ENCODE measurements at regions of chr5 and their contacts with region 1.

Region 1: DNA sequence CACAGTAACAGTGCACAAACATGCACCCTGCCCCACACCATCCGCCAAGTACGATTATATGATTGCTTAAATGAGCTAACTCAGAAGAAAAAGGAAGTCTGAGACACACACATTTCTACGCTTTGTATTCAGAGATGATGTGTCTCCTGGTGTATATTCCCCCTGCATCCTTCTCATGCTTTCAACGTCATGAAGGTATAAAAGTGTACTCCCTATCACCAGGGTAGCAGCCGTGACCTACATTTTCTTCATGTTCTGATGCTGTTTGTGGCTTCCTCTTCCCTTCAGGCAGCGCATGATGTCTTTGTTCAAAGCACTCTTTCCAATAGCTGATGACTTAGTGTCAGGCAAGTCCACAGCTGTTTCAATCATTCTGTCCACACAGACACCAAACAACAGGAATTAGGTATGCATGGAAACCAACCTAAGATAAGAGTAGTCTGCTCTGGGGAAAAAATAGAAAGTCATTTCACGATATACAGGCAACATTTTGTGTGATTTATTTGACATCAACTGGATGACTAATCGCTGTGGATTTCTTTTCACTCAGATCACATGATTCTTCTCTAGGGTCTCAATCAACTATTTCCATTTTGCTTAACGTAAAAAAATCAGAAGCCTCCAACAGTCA is 269.4 kb upstream of the PTGER4 start:
- DNase-seq: peak; percentile 84 to 91 (median 89)
- H3K4me3 ChIP-seq: peak overlapping the region in 2 of 3 experiments; percentile 32 to 56
- H3K4me3 Mint-ChIP-seq: peak overlapping the region; percentile 60 to 82
- H3K27ac ChIP-seq: peak overlapping the region; percentile 83 to 96
- H3K27ac Mint-ChIP-seq: peak overlapping the region; percentile 97 to 100 (median 99)
- H3K4me1 ChIP-seq: peaks cover 78 to 84% of the 10 kb centered on the region in 2 donors
- H3K4me1 Mint-ChIP-seq: peaks cover 79% of the 10 kb centered on the region
- H3K27me3 ChIP-seq: no peaks in the 10 kb centered on the region
- H3K27me3 Mint-ChIP-seq: peaks cover 0 to 2% (median 0%) of the 10 kb centered on the region in 3 donors
- CTCF ChIP-seq: no peak

Region 2: GRCh38 chr5:39740404-39740803 is 669.9 kb before region 1 on chr5:
- intact Hi-C with region 1: no loop called
- DNase-seq: no peak
- H3K4me3 ChIP-seq: no peak overlapping the region
- H3K4me3 Mint-ChIP-seq: no peak overlapping the region
- H3K27ac ChIP-seq: no peak overlapping the region
- H3K27ac Mint-ChIP-seq: no peak overlapping the region
- H3K4me1 ChIP-seq: no peaks in the 10 kb centered on the region
- H3K4me1 Mint-ChIP-seq: no peaks in the 10 kb centered on the region
- H3K27me3 ChIP-seq: peaks cover 0 to 3% of the 10 kb centered on the region in 2 donors
- H3K27me3 Mint-ChIP-seq: peaks cover 0 to 5% (median 4%) of the 10 kb centered on the region in 3 donors
- CTCF ChIP-seq: no peak

Region 3: DNA sequence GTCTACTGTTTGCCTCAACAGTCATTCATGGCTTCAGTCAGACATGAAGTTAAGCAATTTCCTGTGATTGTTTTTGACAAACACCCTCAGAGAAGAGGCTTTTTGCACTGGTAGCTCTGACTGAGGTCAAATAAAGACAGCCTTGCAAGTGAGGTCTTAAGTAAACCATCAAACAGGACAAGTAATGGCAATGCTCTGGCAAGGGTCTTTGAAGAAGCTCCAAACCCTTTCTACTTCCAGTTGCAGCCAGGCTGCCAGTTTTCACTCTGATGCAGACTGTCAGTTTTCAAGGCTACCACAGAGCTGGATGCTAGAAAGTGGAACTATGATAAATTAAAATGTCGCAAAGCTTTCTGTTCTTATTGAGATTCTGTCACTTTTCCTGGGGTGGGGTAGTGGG is 152.1 kb before region 1 on chr5:
- intact Hi-C with region 1: no loop called
- DNase-seq: peak; percentile 39 to 67 (median 40)
- H3K4me3 ChIP-seq: peak overlapping the region in 2 of 3 experiments; percentile 59 to 63
- H3K4me3 Mint-ChIP-seq: peak overlapping the region; percentile 34 to 79
- H3K27ac ChIP-seq: peak overlapping the region; percentile 40 to 88
- H3K27ac Mint-ChIP-seq: peak overlapping the region; percentile 71 to 91 (median 85)
- H3K4me1 ChIP-seq: peaks cover 10 to 16% of the 10 kb centered on the region in 2 donors
- H3K4me1 Mint-ChIP-seq: peaks cover 16% of the 10 kb centered on the region
- H3K27me3 ChIP-seq: no peaks in the 10 kb centered on the region
- H3K27me3 Mint-ChIP-seq: peaks cover 0 to 2% (median 0%) of the 10 kb centered on the region in 3 donors
- CTCF ChIP-seq: no peak

Region 4: DNA sequence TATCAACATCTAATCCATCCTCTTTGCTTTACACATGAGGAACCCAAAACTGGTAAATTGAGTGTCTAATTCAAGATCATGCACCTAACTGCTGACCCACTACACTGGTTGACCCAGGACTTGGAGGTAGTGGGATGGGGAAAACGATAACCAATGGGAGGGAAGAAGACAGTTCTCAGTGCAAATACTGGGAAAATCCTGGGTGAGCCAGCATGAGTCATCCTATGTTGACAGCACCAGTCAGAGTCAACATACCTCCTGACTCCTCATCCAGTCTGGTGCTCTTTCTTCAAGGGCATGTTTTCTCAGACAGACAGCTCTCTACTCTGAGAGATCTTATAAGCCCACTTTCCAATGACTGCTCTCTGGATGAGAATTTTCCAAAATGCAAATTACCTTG is 36.6 kb after region 1 on chr5:
- intact Hi-C with region 1: no loop called
- DNase-seq: peak in 2 of 3 donors; percentile 62 to 90
- H3K4me3 ChIP-seq: no peak overlapping the region
- H3K4me3 Mint-ChIP-seq: no peak overlapping the region
- H3K27ac ChIP-seq: no peak overlapping the region
- H3K27ac Mint-ChIP-seq: peak overlapping the region in 1 of 7 donors; percentile 4
- H3K4me1 ChIP-seq: peaks cover 0 to 4% of the 10 kb centered on the region in 2 donors
- H3K4me1 Mint-ChIP-seq: peaks cover 5% of the 10 kb centered on the region
- H3K27me3 ChIP-seq: no peaks in the 10 kb centered on the region
- H3K27me3 Mint-ChIP-seq: no peaks in the 10 kb centered on the region
- CTCF ChIP-seq: no peak

Region 5: DNA sequence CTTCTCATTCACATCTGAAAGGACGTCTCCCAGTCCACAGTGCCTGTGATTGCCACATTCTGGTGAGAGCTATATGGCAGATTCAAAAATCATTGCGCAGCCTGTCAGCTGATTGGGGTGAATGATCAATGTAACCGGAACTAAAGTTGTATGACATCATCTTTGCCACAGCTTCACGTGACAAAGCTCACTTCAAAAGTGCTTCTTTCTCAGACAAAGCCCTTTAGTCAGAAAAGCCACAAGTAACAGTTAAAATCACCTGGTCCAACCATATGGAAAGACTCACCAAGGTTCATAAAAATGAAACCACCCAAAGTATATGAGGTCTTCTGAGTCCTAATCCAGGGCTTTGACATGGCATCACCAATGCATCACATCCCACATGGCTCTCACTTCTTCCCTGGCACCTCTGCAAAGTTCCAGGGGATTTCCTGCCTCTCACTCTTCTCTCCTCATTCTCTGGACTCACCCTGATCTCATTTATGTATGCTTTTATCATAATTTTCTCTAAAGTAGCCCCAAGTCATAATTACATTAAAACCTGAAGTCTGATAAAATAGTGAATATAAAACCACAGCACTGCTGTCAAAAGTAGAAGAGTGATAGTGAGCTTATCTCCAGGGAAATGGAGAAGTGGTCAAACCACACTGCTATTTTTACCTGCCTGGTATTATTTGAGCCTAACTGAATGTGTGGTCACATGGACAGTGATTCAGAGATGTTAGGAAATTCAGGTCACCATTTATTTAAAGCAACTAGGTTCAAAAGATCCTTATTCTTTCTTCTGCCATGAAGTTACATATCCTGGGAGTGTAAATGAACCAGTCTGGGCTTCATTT is 76.3 kb after region 1 on chr5:
- intact Hi-C with region 1: loop called (anchors 5 kb)
- DNase-seq: peak; percentile 92 to 98 (median 97)
- H3K4me3 ChIP-seq: peak overlapping the region in 1 of 3 experiments; percentile 59
- H3K4me3 Mint-ChIP-seq: peak overlapping the region in 1 of 2 donors; percentile 67
- H3K27ac ChIP-seq: peak overlapping the region; percentile 78 to 92
- H3K27ac Mint-ChIP-seq: peak overlapping the region; percentile 92 to 98 (median 96)
- H3K4me1 ChIP-seq: peaks cover 58 to 78% of the 10 kb centered on the region in 2 donors
- H3K4me1 Mint-ChIP-seq: peaks cover 69% of the 10 kb centered on the region
- H3K27me3 ChIP-seq: no peaks in the 10 kb centered on the region
- H3K27me3 Mint-ChIP-seq: no peaks in the 10 kb centered on the region
- CTCF ChIP-seq: no peak

Measured in CD14-positive monocyte (primary cell).